Posterior vena cava (tissue), 2 donors: ENCODE measurements at regions of chr1 and their contacts with region 1.

Region 1: GRCh38 chr1:201640624-201641023 is 101.7 kb downstream of the NAV1 start:
- DNase-seq: no peak

Region 2: GRCh38 chr1:200526709-200527612 is 1113.7 kb before region 1 on chr1:
- intact Hi-C with region 1: loop called in 1 of 2 experiments (anchors 5 kb)
- DNase-seq: no peak